Dendritic cell treated with granulocyte-macrophage colony-stimulating factor and Interleukin-4, amounts not matched to agents 40 ng/mL and 50 ng/mL, for 4 days (primary cell): ENCODE measurements at regions of chr6 and their contacts with region 1.

Region 1: DNA sequence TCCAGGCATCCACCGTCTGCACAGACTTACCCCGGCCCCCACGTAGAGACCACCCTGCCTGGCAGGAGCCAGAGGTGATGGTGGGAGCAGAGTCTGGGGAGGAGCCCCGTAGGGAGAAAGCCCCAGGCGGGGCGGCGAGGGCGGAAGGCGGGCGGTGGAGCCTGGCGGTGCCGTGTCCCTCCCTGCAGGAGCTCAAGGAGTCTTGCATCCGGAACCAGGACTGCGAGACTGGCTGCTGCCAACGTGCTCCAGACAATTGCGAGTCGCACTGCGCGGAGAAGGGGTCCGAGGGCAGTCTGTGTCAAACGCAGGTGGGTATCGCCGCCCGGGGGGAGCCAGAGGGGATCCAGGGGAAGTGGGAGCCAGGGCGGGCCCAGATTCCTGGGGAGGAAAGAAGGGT is 6.0 kb downstream of the CLPSL1 start:
- H3K4me3 Mint-ChIP-seq: no peak overlapping the region
- H3K27ac Mint-ChIP-seq: no peak overlapping the region
- H3K4me1 Mint-ChIP-seq: peaks cover 5% of the 10 kb centered on the region
- H3K27me3 Mint-ChIP-seq: peaks cover 60% of the 10 kb centered on the region

Region 2: DNA sequence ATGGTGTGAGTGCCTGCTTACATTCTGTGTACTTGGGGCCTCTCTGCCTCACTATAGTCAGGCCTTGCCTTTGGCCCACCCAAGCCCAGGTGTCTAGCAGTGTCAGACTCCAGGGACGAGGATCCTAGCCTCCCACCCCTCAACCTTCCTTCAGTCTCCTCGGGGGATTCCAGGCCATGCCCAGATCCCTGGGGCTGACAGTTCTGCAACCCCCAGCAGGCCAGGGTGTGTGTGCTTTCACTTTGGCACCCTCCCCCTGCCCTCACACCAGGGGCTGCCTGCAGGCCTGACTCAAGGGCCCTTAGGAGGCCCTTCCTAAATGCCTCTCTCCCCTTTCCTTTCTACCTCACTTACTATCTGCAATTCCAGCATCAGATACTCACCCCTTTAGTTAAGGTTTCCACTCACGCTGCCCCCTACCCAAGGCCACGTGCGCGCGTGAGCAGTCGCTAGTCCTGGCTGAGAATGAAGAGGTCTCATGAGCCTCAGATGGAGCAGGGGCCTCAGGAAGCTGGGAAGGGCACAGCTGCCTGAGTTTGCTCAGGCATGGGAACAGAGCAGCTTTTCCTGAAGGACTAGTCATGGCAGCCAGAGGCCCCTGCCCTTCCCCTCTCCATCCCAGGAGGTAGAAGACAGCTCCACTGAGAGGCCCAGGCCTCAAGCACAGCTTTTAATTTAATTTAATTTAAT is 11.2 kb after region 1 on chr6:
- intact Hi-C with region 1: loop called (anchors 1 kb)
- H3K4me3 Mint-ChIP-seq: no peak overlapping the region
- H3K27ac Mint-ChIP-seq: no peak overlapping the region
- H3K4me1 Mint-ChIP-seq: no peaks in the 10 kb centered on the region
- H3K27me3 Mint-ChIP-seq: peaks cover 1% of the 10 kb centered on the region

Region 3: DNA sequence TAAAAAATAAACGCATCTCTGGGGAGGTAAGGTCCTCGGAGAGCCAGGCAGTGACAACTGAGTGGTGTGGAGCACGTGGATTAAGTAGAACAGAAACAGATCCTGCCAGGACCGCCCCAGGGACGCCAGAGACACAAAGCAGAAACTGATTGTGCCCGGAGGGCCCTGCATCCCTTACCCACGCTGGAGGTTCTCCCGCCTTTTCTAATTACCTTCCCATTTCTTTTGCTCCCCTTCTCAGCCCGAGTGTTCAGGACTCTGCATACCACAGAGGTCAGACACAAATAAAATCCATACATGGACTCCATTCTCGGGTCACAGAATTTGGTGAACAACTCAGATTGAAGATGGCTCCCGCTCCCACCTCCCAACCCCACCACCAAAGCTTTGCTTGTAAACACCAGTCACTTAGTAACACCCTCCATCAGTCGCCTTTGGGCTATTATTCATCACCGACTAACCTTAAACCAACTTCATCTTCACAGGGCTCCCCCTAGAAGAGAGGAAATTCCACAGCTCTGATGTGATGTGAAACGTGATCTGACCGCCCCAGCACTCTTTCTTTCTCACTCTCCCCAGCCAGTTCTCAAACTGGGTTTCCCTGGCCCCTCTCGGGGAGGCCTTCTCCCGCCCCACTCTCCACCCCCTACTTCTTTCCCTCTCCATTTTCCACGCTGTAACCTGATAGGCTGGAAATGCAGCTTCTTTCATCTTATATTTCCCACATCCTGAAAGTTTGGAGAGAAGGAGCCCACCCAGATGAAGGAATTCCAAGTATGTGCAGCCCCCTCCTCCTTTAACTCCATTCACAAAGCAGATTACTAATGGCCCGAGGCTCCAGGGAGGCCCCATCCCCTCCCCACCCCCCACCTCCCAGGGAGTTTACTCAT is 1350.6 kb after region 1 on chr6:
- intact Hi-C with region 1: no loop called
- H3K4me3 Mint-ChIP-seq: no peak overlapping the region
- H3K27ac Mint-ChIP-seq: no peak overlapping the region
- H3K4me1 Mint-ChIP-seq: peaks cover 12% of the 10 kb centered on the region
- H3K27me3 Mint-ChIP-seq: peaks cover 3% of the 10 kb centered on the region